Activated CD4-positive, alpha-beta memory T cell treated with anti-CD3 and anti-CD28 coated beads for 36 hours (primary cell): ENCODE measurements at regions of chr15 and their contacts with region 1.

Region 1: GRCh38 chr15:85667491-85668424 is 127.0 kb downstream of the KLHL25 start:
- DNase-seq: peak; percentile 62
- H3K4me3 Mint-ChIP-seq: peak overlapping the region; percentile 20
- H3K27ac Mint-ChIP-seq: peak overlapping the region; percentile 95
- H3K4me1 Mint-ChIP-seq: peaks cover 33% of the 10 kb centered on the region
- H3K27me3 Mint-ChIP-seq: no peaks in the 10 kb centered on the region

Region 2: DNA sequence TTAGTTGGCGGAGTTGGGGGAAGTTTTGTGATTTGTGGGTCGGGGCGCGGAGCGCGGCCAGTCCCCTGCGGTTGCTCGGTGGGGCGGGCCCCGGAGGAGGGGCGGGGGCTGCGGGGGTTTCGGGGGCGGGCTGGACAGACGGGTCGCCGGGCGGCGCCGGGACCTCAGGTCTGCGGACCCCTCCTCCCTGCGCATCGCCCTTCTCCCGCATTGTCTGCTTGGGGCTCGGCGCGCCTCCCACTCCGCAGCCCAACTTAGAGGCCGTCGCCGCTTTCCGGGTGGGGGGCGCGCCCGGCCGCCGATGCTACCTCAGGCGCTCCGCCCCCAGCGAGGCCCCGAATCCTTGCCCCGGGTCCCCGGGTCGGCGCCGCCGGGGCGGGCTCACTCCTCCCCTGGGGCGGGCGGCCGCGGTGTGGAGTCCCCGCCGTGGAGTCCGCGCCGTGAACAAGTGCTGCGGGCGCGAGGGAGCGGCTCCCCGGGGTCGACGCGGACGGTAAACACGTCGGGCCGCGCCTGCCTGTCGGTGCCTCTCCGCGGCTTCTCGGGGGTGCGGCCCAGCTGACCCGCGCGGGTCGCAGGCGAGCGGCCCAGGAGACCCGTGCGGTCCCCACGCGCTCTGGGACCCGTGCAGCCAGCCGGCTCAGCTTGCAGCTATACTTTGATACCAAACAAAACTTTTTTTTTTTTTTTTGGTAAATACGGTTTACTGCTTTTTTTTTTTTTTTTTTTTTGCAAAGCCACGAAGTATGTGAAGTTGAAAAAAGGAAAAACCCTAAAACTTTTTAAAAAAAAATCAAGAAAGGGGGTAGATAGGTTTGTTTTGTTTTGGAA is 286.7 kb before region 1 on chr15:
- CTCF ChIA-PET with region 1: no interaction called
- POLR2A ChIA-PET with region 1: no interaction called
- intact Hi-C with region 1: no loop called
- DNase-seq: peak; percentile 58
- H3K4me3 Mint-ChIP-seq: peak overlapping the region; percentile 85
- H3K27ac Mint-ChIP-seq: peak overlapping the region; percentile 90
- H3K4me1 Mint-ChIP-seq: peaks cover 57% of the 10 kb centered on the region
- H3K27me3 Mint-ChIP-seq: no peaks in the 10 kb centered on the region

Region 3: GRCh38 chr15:85625856-85626255 is 41.9 kb before region 1 on chr15:
- CTCF ChIA-PET with region 1: no interaction called
- POLR2A ChIA-PET with region 1: interaction called, 5 read pairs
- intact Hi-C with region 1: loop called (anchors 1 kb)
- DNase-seq: peak; percentile 65
- H3K4me3 Mint-ChIP-seq: peak overlapping the region; percentile 33
- H3K27ac Mint-ChIP-seq: peak overlapping the region; percentile 87
- H3K4me1 Mint-ChIP-seq: peaks cover 18% of the 10 kb centered on the region
- H3K27me3 Mint-ChIP-seq: no peaks in the 10 kb centered on the region

Region 4: GRCh38 chr15:85689729-85690128 is 22.0 kb after region 1 on chr15:
- CTCF ChIA-PET with region 1: interaction called, 5 read pairs
- POLR2A ChIA-PET with region 1: interaction called, 14 read pairs
- intact Hi-C with region 1: loop called (anchors 1 kb)
- DNase-seq: peak; percentile 78
- H3K4me3 Mint-ChIP-seq: peak overlapping the region; percentile 81
- H3K27ac Mint-ChIP-seq: peak overlapping the region; percentile 98
- H3K4me1 Mint-ChIP-seq: peaks cover 78% of the 10 kb centered on the region
- H3K27me3 Mint-ChIP-seq: no peaks in the 10 kb centered on the region